MCF 10A (cell line): ENCODE measurements at regions of chr18 and their contacts with region 1.

Region 1: GRCh38 chr18:63427558-63427957 is 5.3 kb upstream of the VPS4B start:
- DNase-seq: peak; percentile 83
- H3K4me3 Mint-ChIP-seq: no peak overlapping the region
- H3K27ac Mint-ChIP-seq: peak overlapping the region; percentile 77
- H3K4me1 Mint-ChIP-seq: peaks cover 16% of the 10 kb centered on the region
- H3K27me3 Mint-ChIP-seq: no peaks in the 10 kb centered on the region
- CTCF ChIP-seq: no peak

Region 2: DNA sequence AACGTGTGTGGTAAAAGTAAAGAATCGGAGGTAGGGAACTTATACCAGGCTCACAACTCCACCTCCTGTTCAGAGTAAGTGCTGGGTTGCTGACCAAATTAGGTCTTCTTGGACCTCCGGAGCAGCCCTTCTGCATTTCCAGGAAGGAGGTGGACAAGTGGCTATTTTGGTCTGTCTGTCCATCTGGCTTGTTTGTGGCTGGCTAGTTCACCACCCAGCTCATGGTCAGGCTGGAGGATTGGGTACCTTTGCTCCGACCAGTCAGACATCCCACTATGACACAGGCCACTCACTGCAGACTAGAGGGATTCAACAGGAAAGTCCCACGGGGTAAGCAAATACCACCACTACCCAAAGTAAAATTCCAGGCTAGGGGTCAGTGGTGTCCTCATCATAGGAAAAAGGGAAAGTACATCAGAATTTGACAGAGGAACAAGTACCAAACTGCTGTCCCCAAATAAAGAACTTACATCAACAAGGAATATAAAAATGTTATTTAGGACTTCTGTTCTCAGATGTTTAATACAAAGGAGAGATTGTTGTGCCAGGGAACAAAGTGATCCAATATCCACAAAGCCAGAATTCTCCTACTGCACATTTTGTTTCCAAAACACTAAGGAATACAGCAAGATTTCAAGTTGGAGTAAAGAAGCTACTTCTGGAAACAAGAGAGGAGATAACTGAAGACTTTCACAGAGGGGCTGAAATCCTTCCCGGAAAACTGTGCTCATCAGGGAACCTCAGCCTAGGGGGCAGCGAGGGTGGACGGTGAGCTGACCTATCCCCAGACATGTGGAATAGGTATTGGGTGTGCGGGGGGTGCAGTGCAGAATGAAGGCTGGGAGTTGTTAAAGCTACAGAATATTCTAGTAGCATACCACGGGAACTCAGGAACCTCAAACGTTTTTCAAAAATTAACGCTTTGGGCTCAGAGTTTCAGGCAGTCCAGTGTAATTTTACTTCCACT is 164.9 kb before region 1 on chr18:
- CTCF ChIA-PET with region 1: no interaction called
- POLR2A ChIA-PET with region 1: no interaction called
- intact Hi-C with region 1: no loop called
- DNase-seq: no peak
- H3K4me3 Mint-ChIP-seq: no peak overlapping the region
- H3K27ac Mint-ChIP-seq: no peak overlapping the region
- H3K4me1 Mint-ChIP-seq: peaks cover 6% of the 10 kb centered on the region
- H3K27me3 Mint-ChIP-seq: no peaks in the 10 kb centered on the region
- CTCF ChIP-seq: no peak

Region 3: DNA sequence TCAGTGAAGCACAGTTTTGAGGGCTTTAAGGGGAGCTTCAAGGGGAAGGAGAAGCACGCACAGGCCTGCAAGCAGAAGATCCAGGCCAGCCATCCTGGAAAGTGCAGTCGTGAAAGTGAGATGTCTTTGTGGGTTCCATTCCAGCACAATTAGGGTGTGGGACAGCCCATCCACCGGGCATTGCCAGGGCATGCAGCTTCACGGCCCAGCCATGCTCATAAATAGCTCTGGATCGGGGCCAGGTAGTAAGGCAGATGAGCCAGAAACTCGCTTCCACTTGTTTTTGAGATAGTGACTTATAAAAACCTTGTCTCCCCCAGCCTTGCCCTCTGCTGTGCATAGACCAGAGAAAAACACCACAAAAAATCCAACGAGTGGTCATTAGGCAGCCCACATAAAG is 81.5 kb before region 1 on chr18:
- CTCF ChIA-PET with region 1: interaction called, 4 read pairs
- POLR2A ChIA-PET with region 1: interaction called, 10 read pairs
- intact Hi-C with region 1: no loop called
- DNase-seq: peak; percentile 52
- H3K4me3 Mint-ChIP-seq: no peak overlapping the region
- H3K27ac Mint-ChIP-seq: peak overlapping the region; percentile 87
- H3K4me1 Mint-ChIP-seq: peaks cover 29% of the 10 kb centered on the region
- H3K27me3 Mint-ChIP-seq: no peaks in the 10 kb centered on the region
- CTCF ChIP-seq: no peak

Region 4: DNA sequence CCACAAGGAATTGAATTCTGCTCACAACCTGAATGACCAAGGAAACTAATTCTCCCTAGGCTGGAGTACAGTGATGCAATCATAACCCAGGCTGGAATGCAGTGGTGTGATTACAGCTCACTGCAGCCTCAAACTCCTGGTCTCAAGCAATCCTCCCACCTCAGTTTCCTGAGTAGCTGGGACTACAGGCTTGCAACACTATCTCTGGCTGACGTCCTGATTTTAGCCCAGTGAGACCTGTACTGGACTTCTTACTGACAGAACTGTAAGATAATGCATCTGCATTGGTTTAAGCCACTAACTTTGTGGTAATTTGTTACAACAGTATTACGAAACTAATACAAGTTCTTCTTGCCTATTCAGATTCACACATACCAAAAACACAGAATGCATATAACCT is 51.0 kb before region 1 on chr18:
- CTCF ChIA-PET with region 1: no interaction called
- POLR2A ChIA-PET with region 1: no interaction called
- intact Hi-C with region 1: no loop called
- DNase-seq: peak; percentile 44
- H3K4me3 Mint-ChIP-seq: no peak overlapping the region
- H3K27ac Mint-ChIP-seq: no peak overlapping the region
- H3K4me1 Mint-ChIP-seq: peaks cover 16% of the 10 kb centered on the region
- H3K27me3 Mint-ChIP-seq: no peaks in the 10 kb centered on the region
- CTCF ChIP-seq: no peak

Region 5: DNA sequence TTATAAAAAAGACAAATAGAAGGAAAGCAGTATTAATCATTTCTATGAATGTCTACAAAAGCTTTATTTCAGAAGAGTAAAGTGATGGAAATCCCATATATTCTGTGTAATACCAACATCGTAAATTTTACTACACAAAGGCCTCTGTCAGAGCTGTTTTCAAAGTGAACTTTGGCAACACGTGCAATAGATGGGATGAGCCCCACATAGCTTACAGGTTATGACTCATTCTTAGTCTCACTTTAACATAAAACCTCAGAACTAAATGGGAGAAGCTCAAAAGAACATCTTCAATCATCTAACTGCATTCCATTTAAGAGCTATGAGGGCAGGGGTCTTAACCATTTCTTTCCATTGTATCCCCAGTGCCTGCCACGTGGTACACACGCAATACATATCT is 16.8 kb before region 1 on chr18:
- CTCF ChIA-PET with region 1: no interaction called
- POLR2A ChIA-PET with region 1: interaction called, 85 read pairs
- intact Hi-C with region 1: no loop called
- DNase-seq: peak; percentile 74
- H3K4me3 Mint-ChIP-seq: no peak overlapping the region
- H3K27ac Mint-ChIP-seq: peak overlapping the region; percentile 57
- H3K4me1 Mint-ChIP-seq: peaks cover 25% of the 10 kb centered on the region
- H3K27me3 Mint-ChIP-seq: no peaks in the 10 kb centered on the region
- CTCF ChIP-seq: no peak

Region 6: GRCh38 chr18:63451799-63452660 is 24.5 kb after region 1 on chr18:
- CTCF ChIA-PET with region 1: no interaction called
- POLR2A ChIA-PET with region 1: interaction called, 264 read pairs
- intact Hi-C with region 1: no loop called
- DNase-seq: peak; percentile 92
- H3K4me3 Mint-ChIP-seq: peak overlapping the region; percentile 68
- H3K27ac Mint-ChIP-seq: peak overlapping the region; percentile 89
- H3K4me1 Mint-ChIP-seq: peaks cover 45% of the 10 kb centered on the region
- H3K27me3 Mint-ChIP-seq: no peaks in the 10 kb centered on the region
- CTCF ChIP-seq: no peak